ENCODE measurements at regions of chr6 and their contacts with region 1.

Region 1: DNA sequence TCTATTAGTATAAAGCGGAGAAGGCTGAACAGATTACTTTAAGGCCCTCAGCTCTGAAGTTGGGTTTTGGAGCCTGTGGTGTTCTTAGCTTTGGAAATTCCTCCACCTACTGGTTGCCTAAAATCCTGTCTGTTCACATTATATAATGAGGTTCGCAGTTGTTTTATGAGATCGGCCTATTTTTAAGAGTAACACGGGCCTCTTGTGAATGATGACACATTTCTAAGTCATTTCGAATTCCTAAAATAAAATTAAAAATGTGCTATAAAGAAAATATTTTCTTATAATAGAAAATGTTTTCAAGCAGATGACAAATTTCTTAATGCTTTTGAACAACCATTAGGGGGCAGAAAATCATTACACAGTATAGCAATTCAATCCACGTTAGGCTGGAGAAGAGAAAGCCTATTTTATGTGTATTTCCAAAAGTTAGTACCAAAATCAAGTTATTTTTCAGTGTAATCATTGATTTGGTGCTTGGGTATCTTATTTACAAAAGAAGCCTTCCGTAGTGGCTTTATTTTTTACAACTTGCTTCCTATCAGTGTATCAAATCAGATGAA is 15.8 kb upstream of the FAM8A1 start:
- DNase-seq: peak; percentile 84
- H3K4me3 ChIP-seq: peak overlapping the region in 1 of 3 experiments; percentile 13
- H3K27ac ChIP-seq: peak overlapping the region; percentile 63
- H3K4me1 ChIP-seq: peaks cover 8% of the 10 kb centered on the region
- H3K27me3 ChIP-seq: no peaks in the 10 kb centered on the region
- CTCF ChIP-seq: peak; percentile 38 to 61
- POLR2A ChIP-seq: no peak

Region 2: GRCh38 chr6:17156112-17156921 is 428.0 kb before region 1 on chr6:
- CTCF ChIA-PET with region 1: interaction called, 45 read pairs
- POLR2A ChIA-PET with region 1: no interaction called
- dilution Hi-C with region 1: no loop called
- intact Hi-C with region 1: loop called (anchors 1 kb)
- DNase-seq: peak; percentile 82
- H3K4me3 ChIP-seq: no peak overlapping the region
- H3K27ac ChIP-seq: no peak overlapping the region
- H3K4me1 ChIP-seq: no peaks in the 10 kb centered on the region
- H3K27me3 ChIP-seq: peaks cover 3 to 13% of the 10 kb centered on the region in 2 experiments
- CTCF ChIP-seq: peak; percentile 47 to 60
- POLR2A ChIP-seq: no peak

Region 3: DNA sequence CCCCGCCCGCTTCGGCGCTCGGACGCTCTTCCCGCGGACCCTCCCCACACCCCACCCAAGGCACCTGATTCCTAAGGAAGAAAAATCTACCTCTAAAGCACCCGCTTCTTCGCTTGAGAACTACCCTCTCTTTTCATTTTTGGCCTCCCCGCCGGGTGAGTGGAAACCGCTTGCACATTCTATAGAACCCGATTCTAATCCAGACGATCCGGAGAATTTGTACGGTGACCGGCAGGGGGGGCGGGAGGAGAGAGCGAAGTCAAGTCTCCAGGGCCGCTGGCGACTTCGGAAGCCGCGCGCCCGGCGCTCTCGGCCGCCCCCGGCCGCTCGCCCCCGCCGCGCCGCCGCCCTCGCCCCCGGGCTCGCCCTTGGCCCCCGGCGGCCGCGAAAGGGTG is 303.2 kb before region 1 on chr6 and contains the start of gene RBM24:
- CTCF ChIA-PET with region 1: interaction called, 19 read pairs
- POLR2A ChIA-PET with region 1: no interaction called
- dilution Hi-C with region 1: no loop called
- intact Hi-C with region 1: loop called (anchors 1 kb)
- DNase-seq: peak; percentile 57
- H3K4me3 ChIP-seq: peak within 1 kb of the TSS; percentile 49 to 80 (median 66)
- H3K27ac ChIP-seq: no peak within 1 kb of the TSS
- H3K4me1 ChIP-seq: peaks cover 15% of the 10 kb centered on the region
- H3K27me3 ChIP-seq: no peaks in the 10 kb centered on the region
- CTCF ChIP-seq: peak; percentile 14 to 54
- POLR2A ChIP-seq: no peak
- total RNA-seq, gene RBM24: 6.0 and 6.7 TPM in 2 replicates

Region 4: GRCh38 chr6:17469006-17469832 is 115.1 kb before region 1 on chr6:
- CTCF ChIA-PET with region 1: interaction called, 41 read pairs
- POLR2A ChIA-PET with region 1: no interaction called
- dilution Hi-C with region 1: no loop called
- intact Hi-C with region 1: loop called (anchors 1 kb)
- DNase-seq: peak; percentile 85
- H3K4me3 ChIP-seq: no peak overlapping the region
- H3K27ac ChIP-seq: no peak overlapping the region
- H3K4me1 ChIP-seq: peaks cover 4% of the 10 kb centered on the region
- H3K27me3 ChIP-seq: no peaks in the 10 kb centered on the region
- CTCF ChIP-seq: peak; percentile 39 to 62
- POLR2A ChIP-seq: no peak

Region 5: DNA sequence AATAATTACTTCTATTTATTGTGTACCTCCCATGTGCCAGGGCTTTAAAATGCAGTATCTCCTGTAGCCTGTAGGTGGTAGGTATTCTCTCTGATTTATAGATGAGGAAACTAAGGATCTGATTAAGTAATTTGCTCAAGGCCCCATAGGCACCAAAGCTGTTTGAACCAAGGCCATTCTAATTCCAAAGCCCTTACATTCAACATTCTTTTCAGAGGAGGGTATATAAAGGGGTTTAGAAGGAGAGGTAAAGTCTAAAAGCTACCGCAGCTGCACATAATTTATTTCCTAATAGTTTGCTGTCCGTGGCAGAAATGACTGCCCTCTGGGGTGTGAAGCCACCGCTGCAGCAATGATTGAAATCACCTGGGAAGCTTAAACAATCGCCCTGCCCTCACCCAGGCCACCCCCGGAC is 79.3 kb before region 1 on chr6:
- CTCF ChIA-PET with region 1: interaction called, 26 read pairs
- POLR2A ChIA-PET with region 1: no interaction called
- dilution Hi-C with region 1: no loop called
- intact Hi-C with region 1: no loop called
- DNase-seq: peak; percentile 25
- H3K4me3 ChIP-seq: no peak overlapping the region
- H3K27ac ChIP-seq: no peak overlapping the region
- H3K4me1 ChIP-seq: no peaks in the 10 kb centered on the region
- H3K27me3 ChIP-seq: no peaks in the 10 kb centered on the region
- CTCF ChIP-seq: peak; percentile 4 to 6
- POLR2A ChIP-seq: no peak

Region 6: DNA sequence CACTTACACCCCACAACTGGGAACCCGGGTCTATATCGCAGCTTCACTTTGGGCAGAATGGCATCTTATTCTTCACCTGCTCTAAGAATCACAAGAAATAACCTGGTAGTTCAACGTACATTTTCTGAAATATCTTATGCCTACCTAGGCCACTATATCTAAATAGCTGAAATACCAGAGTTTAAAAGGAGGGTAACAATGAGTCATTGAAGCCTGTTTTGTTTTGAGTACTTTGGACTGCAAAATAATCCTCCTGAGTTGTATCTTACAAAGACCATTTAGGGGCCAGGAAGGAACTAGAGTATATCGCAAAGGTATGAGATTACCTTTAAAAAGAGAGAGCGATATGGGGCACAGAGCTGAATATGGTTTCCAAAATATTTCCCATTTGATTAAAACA is 219.1 kb after region 1 on chr6:
- CTCF ChIA-PET with region 1: interaction called, 29 read pairs
- POLR2A ChIA-PET with region 1: no interaction called
- dilution Hi-C with region 1: no loop called
- intact Hi-C with region 1: loop called (anchors 1 kb)
- DNase-seq: no peak
- H3K4me3 ChIP-seq: no peak overlapping the region
- H3K27ac ChIP-seq: no peak overlapping the region
- H3K4me1 ChIP-seq: peaks cover under 1% of the 10 kb centered on the region
- H3K27me3 ChIP-seq: no peaks in the 10 kb centered on the region
- CTCF ChIP-seq: no peak
- POLR2A ChIP-seq: no peak

Region 7: GRCh38 chr6:17820055-17820454 is 235.7 kb after region 1 on chr6:
- CTCF ChIA-PET with region 1: interaction called, 19 read pairs
- POLR2A ChIA-PET with region 1: no interaction called
- dilution Hi-C with region 1: no loop called
- intact Hi-C with region 1: loop called (anchors 1 kb)
- DNase-seq: no peak
- H3K4me3 ChIP-seq: no peak overlapping the region
- H3K27ac ChIP-seq: no peak overlapping the region
- H3K4me1 ChIP-seq: no peaks in the 10 kb centered on the region
- H3K27me3 ChIP-seq: no peaks in the 10 kb centered on the region
- CTCF ChIP-seq: no peak
- POLR2A ChIP-seq: no peak

Region 8: GRCh38 chr6:18693881-18694280 is 1109.6 kb after region 1 on chr6:
- CTCF ChIA-PET with region 1: no interaction called
- POLR2A ChIA-PET with region 1: no interaction called
- dilution Hi-C with region 1: no loop called
- intact Hi-C with region 1: no loop called
- DNase-seq: no peak
- H3K4me3 ChIP-seq: no peak overlapping the region
- H3K27ac ChIP-seq: no peak overlapping the region
- H3K4me1 ChIP-seq: no peaks in the 10 kb centered on the region
- H3K27me3 ChIP-seq: no peaks in the 10 kb centered on the region
- CTCF ChIP-seq: no peak
- POLR2A ChIP-seq: no peak